ENCODE measurements at regions of chr11 and their contacts with region 1.

Region 1: DNA sequence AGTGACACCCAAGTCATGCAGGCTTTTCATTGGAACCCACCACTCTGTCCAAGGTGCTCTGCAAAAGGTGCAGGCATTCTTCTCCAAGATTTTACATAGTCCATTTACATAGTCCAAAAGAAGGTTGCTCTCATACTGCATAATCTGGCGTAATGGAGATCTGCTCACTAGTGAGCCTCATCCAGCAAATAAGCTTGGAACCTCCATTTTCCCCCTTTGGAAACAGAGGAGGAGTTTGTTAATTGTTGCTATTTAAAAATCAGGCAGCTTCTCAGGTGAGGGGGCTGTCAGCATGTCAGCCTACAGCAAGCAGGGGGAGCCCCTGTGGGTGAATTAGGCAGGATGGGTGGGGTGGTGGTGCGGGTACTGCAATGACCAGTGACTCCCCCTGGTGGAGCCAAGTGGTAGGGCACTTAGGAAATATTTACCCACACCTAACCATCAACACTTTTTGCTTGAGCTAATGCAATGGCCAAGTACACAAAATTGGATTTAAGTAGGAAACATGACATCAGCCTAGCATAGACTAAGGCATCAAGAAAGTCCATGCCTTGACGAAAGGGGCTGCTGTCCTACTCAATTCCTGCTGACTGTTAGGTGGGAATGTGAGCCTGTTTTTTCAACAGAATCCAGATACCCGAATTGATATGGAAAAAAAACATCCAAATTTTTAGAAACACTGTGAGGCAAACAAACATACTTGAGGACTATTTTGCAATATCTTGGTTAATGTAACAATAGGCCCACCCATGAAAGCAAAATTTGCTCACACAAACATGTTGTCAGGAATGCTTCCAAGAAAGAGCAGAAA is 64.5 kb downstream of the AMBRA1 start:
- DNase-seq: peak; percentile 89
- H3K4me3 ChIP-seq: no peak overlapping the region
- H3K27ac ChIP-seq: no peak overlapping the region
- H3K4me1 ChIP-seq: peaks cover 14% of the 10 kb centered on the region
- H3K27me3 ChIP-seq: no peaks in the 10 kb centered on the region
- CTCF ChIP-seq: peak; percentile 100

Region 2: DNA sequence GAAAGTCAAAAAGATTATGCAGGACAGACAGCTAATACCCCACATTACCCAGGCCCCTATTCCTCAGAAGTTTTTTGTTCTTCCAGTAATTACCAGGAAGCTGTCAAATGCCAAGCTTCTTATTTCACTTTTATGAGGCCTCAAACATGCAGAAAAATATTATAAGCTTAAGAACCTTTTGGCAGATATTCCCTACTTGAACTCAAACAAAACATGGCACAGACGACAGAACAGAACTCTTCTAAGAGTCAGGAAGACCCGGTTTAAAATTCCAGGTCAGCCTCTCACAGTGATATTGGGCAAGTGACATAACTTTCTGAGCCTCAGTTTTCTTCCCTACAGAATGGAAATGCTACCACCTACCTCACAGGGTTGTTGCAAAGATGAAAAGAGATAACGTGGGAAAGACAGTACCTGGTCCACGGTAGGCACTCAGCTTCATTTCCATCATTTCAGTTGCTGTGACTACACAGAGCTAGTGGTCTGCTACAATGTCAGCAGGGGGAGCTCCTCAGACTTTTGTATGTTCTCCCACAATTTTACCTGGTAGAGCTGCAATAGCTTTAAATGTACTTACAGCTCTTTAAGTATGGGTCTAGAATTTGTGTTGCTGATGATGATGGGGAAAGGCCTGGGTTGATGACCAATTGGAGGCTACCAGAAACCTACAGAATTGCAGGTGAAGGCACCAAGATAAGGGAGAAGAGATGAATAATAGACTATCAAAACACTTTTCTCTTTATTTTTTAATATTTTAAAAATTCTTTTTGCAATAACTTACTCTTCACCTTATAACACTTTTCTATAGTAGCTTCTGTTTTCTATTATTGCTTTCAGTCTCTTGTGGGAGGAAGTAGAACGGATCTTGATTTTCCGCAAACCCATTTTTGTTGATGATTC is 39.4 kb before region 1 on chr11:
- CTCF ChIA-PET with region 1: interaction called, 23 read pairs
- POLR2A ChIA-PET with region 1: no interaction called
- intact Hi-C with region 1: loop called (anchors 1 kb)
- DNase-seq: peak; percentile 90
- H3K4me3 ChIP-seq: no peak overlapping the region
- H3K27ac ChIP-seq: no peak overlapping the region
- H3K4me1 ChIP-seq: peaks cover 59% of the 10 kb centered on the region
- H3K27me3 ChIP-seq: no peaks in the 10 kb centered on the region
- CTCF ChIP-seq: peak; percentile 99

Region 3: DNA sequence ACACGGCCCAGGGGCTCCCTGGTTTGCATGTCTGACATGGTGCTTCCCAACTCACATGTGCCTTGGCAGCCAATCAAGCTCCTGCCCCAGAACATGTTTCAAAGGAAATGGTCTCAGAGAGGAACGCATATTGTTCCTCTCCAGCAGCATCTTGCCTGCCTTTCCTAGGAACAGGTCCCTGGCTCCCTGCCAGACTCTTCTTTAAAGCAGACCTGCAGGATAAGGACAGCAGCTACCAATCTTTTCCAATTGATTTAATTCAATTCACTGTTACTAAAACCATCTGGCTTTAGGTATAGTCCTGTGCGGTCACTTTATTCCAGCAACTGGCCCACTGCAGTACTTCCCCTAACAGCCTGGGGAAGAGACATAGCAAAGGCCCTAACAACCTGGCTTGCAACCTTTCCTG is 15.4 kb before region 1 on chr11:
- CTCF ChIA-PET with region 1: interaction called, 10 read pairs
- POLR2A ChIA-PET with region 1: no interaction called
- intact Hi-C with region 1: loop called (anchors 2 kb)
- DNase-seq: peak; percentile 79
- H3K4me3 ChIP-seq: no peak overlapping the region
- H3K27ac ChIP-seq: no peak overlapping the region
- H3K4me1 ChIP-seq: peaks cover 10% of the 10 kb centered on the region
- H3K27me3 ChIP-seq: no peaks in the 10 kb centered on the region
- CTCF ChIP-seq: no peak

Measured in A673 (cell line).